ENCODE measurements at regions of chr9 and their contacts with region 1.

Region 1: DNA sequence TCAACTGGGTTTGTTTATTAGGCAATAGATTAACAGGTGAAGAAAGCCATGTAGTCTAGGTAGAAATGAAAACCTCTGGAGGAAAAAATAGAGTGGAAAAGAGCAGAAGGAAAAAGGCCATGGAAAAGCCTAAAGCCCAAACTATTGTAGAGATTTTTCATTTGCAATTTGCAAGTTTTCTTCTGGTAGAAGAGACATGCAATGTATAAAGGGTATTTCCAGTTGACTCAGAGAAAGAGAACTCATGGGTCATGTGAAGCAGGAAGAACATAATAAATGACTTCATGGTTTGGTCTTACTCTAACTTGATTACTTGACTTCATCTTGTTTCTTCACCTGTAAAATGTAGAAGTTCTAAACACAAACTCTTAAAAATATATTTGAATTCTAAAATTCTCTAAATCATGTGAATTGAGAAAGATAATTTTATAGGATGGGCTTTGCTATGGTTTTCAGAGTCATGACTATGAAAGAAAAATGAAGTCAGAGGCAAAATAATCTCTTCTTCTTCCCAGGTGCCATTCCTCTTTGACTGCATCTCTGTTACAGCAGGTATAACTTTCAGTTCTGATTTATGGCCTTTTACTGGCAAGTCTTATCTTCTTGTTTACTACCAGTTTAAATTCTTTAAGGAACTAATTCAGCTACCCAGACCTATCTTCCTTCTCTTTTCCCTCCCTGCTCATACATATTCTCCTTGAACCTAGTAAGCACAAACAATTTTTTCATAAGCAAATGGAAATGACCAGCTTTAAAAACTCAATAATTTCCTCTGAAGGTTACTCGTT is 47.7 kb upstream of the TMC1 start:
- DNase-seq: peak; percentile 73
- H3K4me3 ChIP-seq: no peak overlapping the region
- H3K27ac ChIP-seq: no peak overlapping the region
- H3K4me1 ChIP-seq: peaks cover 41% of the 10 kb centered on the region
- H3K27me3 ChIP-seq: no peaks in the 10 kb centered on the region
- CTCF ChIP-seq: no peak

Region 2: DNA sequence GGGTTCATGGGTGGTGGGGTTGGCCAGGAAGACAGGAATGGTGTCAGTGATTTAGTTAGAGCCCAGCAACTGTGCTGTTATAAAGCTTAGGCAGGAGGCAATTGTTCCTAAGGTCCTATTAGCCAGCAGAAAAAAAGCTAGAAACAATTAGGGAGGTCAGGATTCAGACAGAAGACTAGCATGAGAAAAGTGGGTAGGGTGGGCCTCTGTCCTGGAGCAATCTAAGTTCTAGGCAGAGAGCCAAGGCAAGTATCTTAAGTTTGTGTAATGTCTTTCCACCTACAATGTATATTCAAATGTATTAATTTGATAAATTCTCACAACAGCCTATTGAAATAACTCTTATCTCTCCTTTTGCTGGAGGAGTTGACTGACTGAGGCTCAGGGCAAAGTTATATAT is 102.5 kb before region 1 on chr9:
- CTCF ChIA-PET with region 1: no interaction called
- dilution Hi-C with region 1: loop called (anchors 10 kb)
- in situ Hi-C with region 1: no loop called
- intact Hi-C with region 1: no loop called
- DNase-seq: no peak
- H3K4me3 ChIP-seq: no peak overlapping the region
- H3K27ac ChIP-seq: no peak overlapping the region
- H3K4me1 ChIP-seq: no peaks in the 10 kb centered on the region
- H3K27me3 ChIP-seq: no peaks in the 10 kb centered on the region
- CTCF ChIP-seq: no peak

Region 3: GRCh38 chr9:72807765-72808445 is 334.2 kb after region 1 on chr9:
- CTCF ChIA-PET with region 1: no interaction called
- dilution Hi-C with region 1: no loop called
- in situ Hi-C with region 1: no loop called
- intact Hi-C with region 1: no loop called
- DNase-seq: peak; percentile 7
- H3K4me3 ChIP-seq: no peak overlapping the region
- H3K27ac ChIP-seq: no peak overlapping the region
- H3K4me1 ChIP-seq: no peaks in the 10 kb centered on the region
- H3K27me3 ChIP-seq: no peaks in the 10 kb centered on the region
- CTCF ChIP-seq: peak in 1 of 2 donors; percentile 4